H1 (cell line): ENCODE measurements at regions of chr13 and their contacts with region 1.

Region 1: DNA sequence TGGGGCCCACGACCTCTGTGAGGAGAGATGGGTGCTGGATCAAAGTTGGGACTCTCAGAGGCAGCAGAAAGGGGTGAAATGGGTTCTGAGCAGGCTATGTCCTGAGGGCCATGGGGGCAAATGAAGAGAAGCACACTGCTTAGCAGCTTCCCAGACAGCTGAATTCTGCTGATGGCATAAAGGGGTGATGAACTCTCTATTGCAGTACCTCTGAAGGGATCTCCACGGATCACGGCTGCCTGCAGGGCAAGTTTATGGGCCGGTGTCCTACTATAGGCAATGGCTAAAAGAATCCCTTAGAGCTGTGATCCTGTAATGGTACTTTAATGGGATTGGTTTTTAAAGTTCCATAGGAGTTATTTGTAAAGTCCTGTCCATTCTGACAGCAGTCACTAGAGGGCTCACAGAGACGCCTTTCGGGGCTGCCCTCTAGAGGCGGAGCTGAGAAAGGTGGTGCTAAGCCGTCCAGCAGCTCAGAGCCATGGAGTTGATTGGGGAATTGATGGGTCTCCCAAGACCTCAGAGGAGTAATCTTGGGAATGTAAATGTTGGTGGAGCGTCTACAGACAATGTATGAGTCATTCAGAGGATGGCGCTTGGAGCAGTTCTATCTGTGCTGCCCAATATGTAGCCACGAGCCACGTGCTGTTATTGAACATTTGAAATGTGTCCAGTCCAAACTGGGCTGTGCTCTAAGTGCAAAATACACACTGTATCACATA is 287.3 kb downstream of the COG6 start:
- DNase-seq: peak; percentile 73 to 76
- H3K4me3 ChIP-seq: no peak overlapping the region
- H3K27ac ChIP-seq: no peak overlapping the region
- H3K4me1 ChIP-seq: peaks cover 0 to 5% (median 1%) of the 10 kb centered on the region in 4 experiments; a peak in 2 of 7 replicates
- H3K27me3 ChIP-seq: no peaks in the 10 kb centered on the region
- CTCF ChIP-seq: peak; percentile 95 to 100 (median 100)
- EP300 ChIP-seq: no peak
- POLR2A ChIP-seq: no peak
- RAD21 ChIP-seq: peak; percentile 83 to 89

Region 2: GRCh38 chr13:39765801-39766463 is 176.8 kb before region 1 on chr13:
- CTCF ChIA-PET with region 1: interaction called, 18 read pairs
- POLR2A ChIA-PET with region 1: no interaction called
- DNase-seq: no peak
- H3K4me3 ChIP-seq: no peak overlapping the region
- H3K27ac ChIP-seq: no peak overlapping the region
- H3K4me1 ChIP-seq: peaks cover 0 to 4% (median 0%) of the 10 kb centered on the region in 4 experiments; a peak in 2 of 7 replicates
- H3K27me3 ChIP-seq: no peaks in the 10 kb centered on the region
- CTCF ChIP-seq: peak; percentile 47 to 66 (median 56)
- EP300 ChIP-seq: no peak
- POLR2A ChIP-seq: no peak
- RAD21 ChIP-seq: peak; percentile 87 to 90

Region 3: GRCh38 chr13:39777527-39778061 is 165.1 kb before region 1 on chr13:
- CTCF ChIA-PET with region 1: interaction called, 19 read pairs
- POLR2A ChIA-PET with region 1: no interaction called
- DNase-seq: no peak
- H3K4me3 ChIP-seq: no peak overlapping the region
- H3K27ac ChIP-seq: no peak overlapping the region
- H3K4me1 ChIP-seq: no peaks in the 10 kb centered on the region
- H3K27me3 ChIP-seq: no peaks in the 10 kb centered on the region
- CTCF ChIP-seq: peak; percentile 38 to 52 (median 44)
- EP300 ChIP-seq: no peak
- POLR2A ChIP-seq: no peak
- RAD21 ChIP-seq: peak; percentile 57 to 67

Region 4: GRCh38 chr13:39959497-39960144 is 16.9 kb after region 1 on chr13:
- CTCF ChIA-PET with region 1: interaction called, 55 read pairs
- POLR2A ChIA-PET with region 1: interaction called, 3 read pairs
- DNase-seq: no peak
- H3K4me3 ChIP-seq: no peak overlapping the region
- H3K27ac ChIP-seq: no peak overlapping the region
- H3K4me1 ChIP-seq: no peaks in the 10 kb centered on the region
- H3K27me3 ChIP-seq: no peaks in the 10 kb centered on the region
- CTCF ChIP-seq: no peak
- EP300 ChIP-seq: no peak
- POLR2A ChIP-seq: no peak
- RAD21 ChIP-seq: no peak

Region 5: GRCh38 chr13:39988351-39988750 is 45.6 kb after region 1 on chr13:
- CTCF ChIA-PET with region 1: no interaction called
- POLR2A ChIA-PET with region 1: no interaction called
- DNase-seq: no peak
- H3K4me3 ChIP-seq: no peak overlapping the region
- H3K27ac ChIP-seq: no peak overlapping the region
- H3K4me1 ChIP-seq: no peaks in the 10 kb centered on the region
- H3K27me3 ChIP-seq: no peaks in the 10 kb centered on the region
- CTCF ChIP-seq: no peak
- EP300 ChIP-seq: no peak
- POLR2A ChIP-seq: no peak
- RAD21 ChIP-seq: no peak

Region 6: GRCh38 chr13:40017662-40018262 is 75.0 kb after region 1 on chr13:
- CTCF ChIA-PET with region 1: interaction called, 12 read pairs
- POLR2A ChIA-PET with region 1: no interaction called
- DNase-seq: no peak
- H3K4me3 ChIP-seq: no peak overlapping the region
- H3K27ac ChIP-seq: no peak overlapping the region
- H3K4me1 ChIP-seq: no peaks in the 10 kb centered on the region; a peak in 1 of 7 replicates
- H3K27me3 ChIP-seq: no peaks in the 10 kb centered on the region
- CTCF ChIP-seq: peak in 2 of 3 experiments; percentile 9 to 29; a peak in 2 of 4 replicates
- EP300 ChIP-seq: no peak
- POLR2A ChIP-seq: no peak
- RAD21 ChIP-seq: peak in 1 of 2 experiments; percentile 31; a peak in 1 of 4 replicates